ENCODE measurements at regions of chr17 and their contacts with region 1.

Region 1: DNA sequence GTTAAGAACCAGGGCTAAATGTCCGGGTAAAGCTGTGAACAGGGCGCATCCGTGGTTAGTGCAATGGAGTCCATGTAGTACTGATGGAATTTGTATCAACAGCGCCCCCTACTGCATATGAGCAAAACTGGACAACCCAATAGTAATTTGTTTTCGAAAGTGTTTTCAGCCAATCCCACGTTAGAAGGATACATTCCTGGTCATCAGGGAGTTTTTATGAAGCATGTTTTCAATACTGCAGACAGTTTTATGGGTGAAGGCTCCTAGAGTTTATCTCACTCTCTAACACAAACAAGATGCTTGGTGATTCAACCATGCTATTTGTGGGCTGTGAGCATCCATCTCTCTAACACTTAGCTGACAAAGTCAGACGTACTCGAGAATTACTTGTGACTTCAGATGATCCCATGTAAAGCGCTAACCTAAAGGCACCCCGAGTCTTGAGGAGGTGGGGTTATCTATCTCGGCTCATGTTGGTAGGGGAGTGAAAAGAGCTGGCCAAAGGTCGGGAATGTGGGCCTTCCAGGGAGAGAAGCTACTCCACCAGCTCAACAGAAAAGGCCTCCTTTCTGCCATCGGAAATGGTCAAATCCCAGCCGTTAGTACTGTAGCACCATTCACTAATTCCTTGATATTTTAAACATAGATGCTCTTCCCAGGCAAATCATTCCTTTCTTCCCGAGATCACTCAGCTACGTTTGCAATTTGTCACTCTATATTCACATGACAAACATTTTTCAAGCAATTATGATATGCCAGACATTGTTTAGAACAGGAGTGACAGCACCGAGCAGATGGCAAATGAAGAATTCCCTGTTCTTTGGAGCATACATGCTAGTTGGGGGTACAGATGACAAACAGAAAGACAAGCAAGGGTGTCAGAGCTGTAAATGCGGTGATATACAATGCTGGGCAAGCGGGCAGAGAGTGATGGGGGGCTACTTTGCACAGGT is 46.9 kb upstream of the HNF1B start:
- DNase-seq: peak in 6 of 9 experiments; percentile 5 to 68 (median 29)
- ATAC-seq: peak; percentile 42
- H3K4me3 ChIP-seq: no peak overlapping the region
- H3K4me3 Mint-ChIP-seq: no peak overlapping the region
- H3K27ac ChIP-seq: no peak overlapping the region
- H3K27ac Mint-ChIP-seq: no peak overlapping the region
- H3K4me1 ChIP-seq: no peaks in the 10 kb centered on the region
- H3K4me1 Mint-ChIP-seq: no peaks in the 10 kb centered on the region
- H3K27me3 ChIP-seq: peaks cover 0 to 3% of the 10 kb centered on the region in 2 experiments
- H3K27me3 Mint-ChIP-seq: peaks cover 19% of the 10 kb centered on the region
- CTCF ChIP-seq: peak; percentile 69

Region 2: GRCh38 chr17:37373530-37374159 is 418.1 kb before region 1 on chr17:
- CTCF ChIA-PET with region 1: interaction called, 4 read pairs
- POLR2A ChIA-PET with region 1: no interaction called
- intact Hi-C with region 1: loop called in 1 of 2 experiments (anchors 10 kb)
- DNase-seq: peak; percentile 30 to 80 (median 58)
- ATAC-seq: peak; percentile 98
- H3K4me3 ChIP-seq: no peak overlapping the region
- H3K4me3 Mint-ChIP-seq: no peak overlapping the region
- H3K27ac ChIP-seq: no peak overlapping the region
- H3K27ac Mint-ChIP-seq: no peak overlapping the region
- H3K4me1 ChIP-seq: no peaks in the 10 kb centered on the region
- H3K4me1 Mint-ChIP-seq: peaks cover 3% of the 10 kb centered on the region
- H3K27me3 ChIP-seq: no peaks in the 10 kb centered on the region
- H3K27me3 Mint-ChIP-seq: no peaks in the 10 kb centered on the region
- CTCF ChIP-seq: peak; percentile 96

Region 3: DNA sequence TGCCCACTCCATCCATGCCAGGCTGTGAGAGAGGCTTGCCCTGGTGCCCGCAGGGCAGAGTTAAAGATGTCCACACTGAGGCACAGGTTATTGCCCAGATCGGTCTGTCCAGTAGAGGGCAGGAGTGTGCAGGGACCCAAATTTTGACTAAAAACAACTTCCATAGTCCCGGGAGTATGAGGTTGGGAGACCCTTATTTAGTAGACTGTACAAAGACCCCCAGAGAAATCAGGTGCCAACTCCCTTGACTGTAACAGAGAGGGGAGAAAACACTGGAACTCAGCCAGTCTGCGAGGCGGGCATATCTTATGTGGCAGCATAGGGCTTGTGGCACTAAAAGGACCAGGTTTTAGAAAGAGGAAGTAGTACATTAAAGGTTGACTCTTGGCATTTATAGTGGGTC is 90.2 kb before region 1 on chr17:
- CTCF ChIA-PET with region 1: interaction called, 8 read pairs
- POLR2A ChIA-PET with region 1: no interaction called
- intact Hi-C with region 1: loop called (anchors 1 to 5 kb)
- DNase-seq: peak in 7 of 9 experiments; percentile 12 to 55 (median 31)
- ATAC-seq: peak; percentile 42
- H3K4me3 ChIP-seq: no peak overlapping the region
- H3K4me3 Mint-ChIP-seq: no peak overlapping the region
- H3K27ac ChIP-seq: no peak overlapping the region
- H3K27ac Mint-ChIP-seq: no peak overlapping the region
- H3K4me1 ChIP-seq: peaks cover 4% of the 10 kb centered on the region
- H3K4me1 Mint-ChIP-seq: peaks cover 10% of the 10 kb centered on the region
- H3K27me3 ChIP-seq: no peaks in the 10 kb centered on the region
- H3K27me3 Mint-ChIP-seq: peaks cover 5% of the 10 kb centered on the region
- CTCF ChIP-seq: peak; percentile 53

Region 4: DNA sequence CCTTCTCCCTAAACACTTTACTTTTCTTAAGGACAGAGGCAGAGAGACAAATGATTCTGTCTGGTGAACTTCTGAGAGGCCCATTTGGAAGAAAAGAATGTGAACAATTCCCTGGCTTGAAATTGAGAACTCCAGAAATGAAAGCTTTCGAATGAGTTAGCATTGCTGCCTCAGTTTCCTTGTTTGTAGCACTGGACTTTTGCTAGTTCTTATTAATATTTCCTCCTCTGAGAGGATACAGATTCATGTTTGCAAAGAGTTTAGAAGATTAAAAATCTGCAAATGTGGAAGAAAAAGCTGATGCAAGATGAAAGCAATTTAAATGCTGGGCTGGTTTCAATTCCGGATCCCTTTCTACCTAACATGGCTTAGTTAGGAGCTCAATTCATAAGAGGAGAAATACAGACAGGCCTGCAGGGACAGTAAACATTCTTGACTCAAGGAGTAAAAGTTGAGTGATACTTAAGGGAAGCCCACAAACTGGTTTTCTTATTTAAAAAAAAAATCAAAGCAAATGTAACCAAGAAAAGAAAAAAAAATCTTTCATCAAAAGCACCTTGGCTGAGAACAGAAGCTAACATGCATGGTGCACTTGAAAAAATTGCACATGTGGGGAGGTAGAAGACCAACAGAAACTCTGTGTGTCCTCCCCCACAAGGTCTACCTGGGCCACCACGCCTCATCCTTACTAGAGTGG is 73.9 kb before region 1 on chr17:
- CTCF ChIA-PET with region 1: no interaction called
- POLR2A ChIA-PET with region 1: no interaction called
- intact Hi-C with region 1: no loop called
- DNase-seq: peak in 2 of 9 experiments; percentile 7 to 34
- ATAC-seq: no peak
- H3K4me3 ChIP-seq: no peak overlapping the region
- H3K4me3 Mint-ChIP-seq: no peak overlapping the region
- H3K27ac ChIP-seq: no peak overlapping the region
- H3K27ac Mint-ChIP-seq: peak overlapping the region; percentile 10
- H3K4me1 ChIP-seq: peaks cover 3% of the 10 kb centered on the region
- H3K4me1 Mint-ChIP-seq: peaks cover 19% of the 10 kb centered on the region
- H3K27me3 ChIP-seq: peaks cover 0 to 5% of the 10 kb centered on the region in 2 experiments
- H3K27me3 Mint-ChIP-seq: peaks cover 1% of the 10 kb centered on the region
- CTCF ChIP-seq: no peak

Region 5: GRCh38 chr17:37744961-37745800 is 46.5 kb before region 1 on chr17 and contains the start of gene HNF1B:
- CTCF ChIA-PET with region 1: no interaction called
- POLR2A ChIA-PET with region 1: no interaction called
- intact Hi-C with region 1: loop called in 1 of 2 experiments (anchors 5 kb)
- DNase-seq: peak in 2 of 9 experiments; percentile 9 to 37
- ATAC-seq: no peak
- H3K4me3 ChIP-seq: no peak within 1 kb of the TSS
- H3K4me3 Mint-ChIP-seq: peak within 1 kb of the TSS; percentile 64
- H3K27ac ChIP-seq: no peak within 1 kb of the TSS
- H3K27ac Mint-ChIP-seq: no peak within 1 kb of the TSS
- H3K4me1 ChIP-seq: peaks cover 38% of the 10 kb centered on the region
- H3K4me1 Mint-ChIP-seq: peaks cover 29% of the 10 kb centered on the region
- H3K27me3 ChIP-seq: peaks cover 34 to 45% of the 10 kb centered on the region in 2 experiments
- H3K27me3 Mint-ChIP-seq: peaks cover 63% of the 10 kb centered on the region
- CTCF ChIP-seq: no peak
- total RNA-seq, gene HNF1B: not detected